Activated CD8-positive, alpha-beta T cell treated with anti-CD3 and anti-CD28 coated beads, Interleukin-2, amount 10 ng/mL, durations not matched to agents 7 days and 5 days (primary cell): ENCODE measurements at regions of chr15 and their contacts with region 1.

Region 1: GRCh38 chr15:39686000-39686613 is 96.5 kb downstream of the FSIP1 start:
- DNase-seq: peak; percentile 53
- ATAC-seq: no peak
- H3K4me3 Mint-ChIP-seq: no peak overlapping the region
- H3K27ac Mint-ChIP-seq: no peak overlapping the region
- H3K4me1 Mint-ChIP-seq: peaks cover 13% of the 10 kb centered on the region
- H3K27me3 Mint-ChIP-seq: peaks cover 13% of the 10 kb centered on the region

Region 2: DNA sequence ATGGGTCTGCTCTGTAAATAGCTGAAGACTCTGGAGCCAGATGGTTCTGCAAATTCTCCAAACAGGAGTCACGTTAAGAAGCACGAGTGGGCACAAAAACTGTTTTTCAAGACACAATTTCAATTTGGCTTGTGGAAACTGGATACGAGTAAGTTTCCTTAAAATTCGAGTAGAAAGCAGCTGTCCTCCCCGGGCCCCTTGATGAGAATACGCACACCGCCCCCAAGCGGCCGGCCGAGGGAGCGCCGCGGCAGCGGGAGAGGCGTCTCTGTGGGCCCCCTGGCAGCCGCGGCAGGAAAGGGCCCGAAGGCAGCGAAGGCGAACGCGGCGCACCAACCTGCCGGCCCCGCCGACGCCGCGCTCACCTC is 106.0 kb before region 1 on chr15:
- CTCF ChIA-PET with region 1: interaction called, 22 read pairs
- POLR2A ChIA-PET with region 1: no interaction called
- DNase-seq: peak; percentile 93
- ATAC-seq: peak; percentile 96
- H3K4me3 Mint-ChIP-seq: peak overlapping the region; percentile 66
- H3K27ac Mint-ChIP-seq: no peak overlapping the region
- H3K4me1 Mint-ChIP-seq: peaks cover 36% of the 10 kb centered on the region
- H3K27me3 Mint-ChIP-seq: peaks cover 53% of the 10 kb centered on the region

Region 3: DNA sequence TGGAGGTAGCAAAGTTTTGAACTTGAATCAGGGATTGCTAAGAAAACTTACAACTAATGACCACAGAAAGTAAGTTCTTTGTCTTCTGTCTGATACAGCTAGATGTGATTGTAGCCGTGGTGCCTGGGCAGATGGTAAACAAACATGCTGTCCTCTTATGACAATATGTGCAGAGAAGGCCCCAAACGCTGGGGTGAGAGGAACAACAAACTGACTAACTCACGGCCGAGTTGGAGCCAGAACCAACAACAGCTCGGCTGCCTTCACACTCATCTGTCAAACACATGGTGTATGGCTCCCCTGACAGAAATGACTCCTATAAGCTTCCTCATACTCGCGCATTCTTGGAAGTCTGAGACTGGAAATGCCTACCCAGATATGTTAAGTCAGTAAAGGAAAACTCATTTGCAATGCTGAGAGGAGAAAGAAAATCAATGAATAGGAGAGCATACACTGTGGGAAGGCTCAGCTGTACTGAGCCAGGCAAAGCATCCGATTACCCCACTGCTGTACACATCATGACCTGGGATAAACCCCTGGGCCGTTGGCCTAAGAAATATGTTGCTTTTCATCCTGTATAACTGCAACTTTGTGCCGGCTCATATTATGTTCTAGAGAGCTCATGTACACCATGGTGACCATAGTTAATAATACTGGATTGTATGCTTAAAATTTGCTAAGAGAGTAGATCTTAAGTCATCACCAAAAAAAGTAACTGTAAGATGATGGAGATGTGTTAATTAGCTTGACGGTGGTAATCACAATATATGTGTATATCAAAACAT is 99.5 kb before region 1 on chr15:
- CTCF ChIA-PET with region 1: interaction called, 22 read pairs
- POLR2A ChIA-PET with region 1: no interaction called
- DNase-seq: no peak
- ATAC-seq: no peak
- H3K4me3 Mint-ChIP-seq: no peak overlapping the region
- H3K27ac Mint-ChIP-seq: no peak overlapping the region
- H3K4me1 Mint-ChIP-seq: peaks cover 31% of the 10 kb centered on the region
- H3K27me3 Mint-ChIP-seq: peaks cover 23% of the 10 kb centered on the region

Region 4: GRCh38 chr15:39624806-39625205 is 61.3 kb before region 1 on chr15:
- CTCF ChIA-PET with region 1: interaction called, 47 read pairs
- POLR2A ChIA-PET with region 1: no interaction called
- DNase-seq: peak; percentile 83
- ATAC-seq: peak; percentile 79
- H3K4me3 Mint-ChIP-seq: peak overlapping the region; percentile 62
- H3K27ac Mint-ChIP-seq: peak overlapping the region; percentile 97
- H3K4me1 Mint-ChIP-seq: peaks cover 85% of the 10 kb centered on the region
- H3K27me3 Mint-ChIP-seq: no peaks in the 10 kb centered on the region

Region 5: GRCh38 chr15:39642011-39642640 is 44.0 kb before region 1 on chr15:
- CTCF ChIA-PET with region 1: interaction called, 10 read pairs
- POLR2A ChIA-PET with region 1: no interaction called
- DNase-seq: no peak
- ATAC-seq: no peak
- H3K4me3 Mint-ChIP-seq: no peak overlapping the region
- H3K27ac Mint-ChIP-seq: no peak overlapping the region
- H3K4me1 Mint-ChIP-seq: peaks cover 21% of the 10 kb centered on the region
- H3K27me3 Mint-ChIP-seq: peaks cover 10% of the 10 kb centered on the region

Region 6: GRCh38 chr15:39665629-39666245 is 20.4 kb before region 1 on chr15:
- CTCF ChIA-PET with region 1: interaction called, 10 read pairs
- POLR2A ChIA-PET with region 1: no interaction called
- DNase-seq: no peak
- ATAC-seq: no peak
- H3K4me3 Mint-ChIP-seq: no peak overlapping the region
- H3K27ac Mint-ChIP-seq: no peak overlapping the region
- H3K4me1 Mint-ChIP-seq: no peaks in the 10 kb centered on the region
- H3K27me3 Mint-ChIP-seq: peaks cover 14% of the 10 kb centered on the region

Region 7: DNA sequence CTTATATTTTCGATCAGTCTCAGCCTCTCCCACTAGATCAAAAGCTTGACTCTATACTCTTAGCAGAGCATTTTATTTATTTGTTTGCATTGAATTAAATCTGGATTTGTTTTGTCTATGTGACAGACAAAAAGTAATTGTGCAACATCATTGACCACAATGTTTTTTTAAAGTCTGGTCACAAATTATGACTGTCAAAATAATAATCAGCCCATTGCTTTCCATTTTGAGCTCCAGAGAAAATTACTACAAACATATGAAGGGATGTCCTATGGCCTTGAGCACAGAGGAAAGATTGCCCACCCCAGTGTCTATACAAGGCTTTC is 14.2 kb after region 1 on chr15:
- CTCF ChIA-PET with region 1: interaction called, 12 read pairs
- POLR2A ChIA-PET with region 1: no interaction called
- DNase-seq: no peak
- ATAC-seq: no peak
- H3K4me3 Mint-ChIP-seq: no peak overlapping the region
- H3K27ac Mint-ChIP-seq: no peak overlapping the region
- H3K4me1 Mint-ChIP-seq: no peaks in the 10 kb centered on the region
- H3K27me3 Mint-ChIP-seq: peaks cover 4% of the 10 kb centered on the region